Naive thymus-derived CD4-positive, alpha-beta T cell (primary cell): ENCODE measurements at regions of chr1 and their contacts with region 1.

Region 1: GRCh38 chr1:224113918-224114786 is at the start of gene FBXO28:
- DNase-seq: peak; percentile 69 to 94 (median 88)
- ATAC-seq: peak; percentile 96
- H3K4me3 ChIP-seq: peak within 1 kb of the TSS; percentile 92
- H3K4me3 Mint-ChIP-seq: peak within 1 kb of the TSS; percentile 89 to 96 (median 92)
- H3K27ac ChIP-seq: peak within 1 kb of the TSS; percentile 92
- H3K27ac Mint-ChIP-seq: peak within 1 kb of the TSS; percentile 89 to 96 (median 94)
- H3K4me1 ChIP-seq: peaks cover 4 to 14% of the 10 kb centered on the region in 2 donors
- H3K4me1 Mint-ChIP-seq: peaks cover 11 to 41% (median 30%) of the 10 kb centered on the region in 7 donors
- H3K27me3 ChIP-seq: no peaks in the 10 kb centered on the region
- H3K27me3 Mint-ChIP-seq: peaks cover 0 to 26% (median 11%) of the 10 kb centered on the region in 5 donors
- total RNA-seq, gene FBXO28: 25.2 to 37.8 (median 26.5) TPM

Region 2: GRCh38 chr1:224067621-224068457 is 46.3 kb before region 1 on chr1:
- CTCF ChIA-PET with region 1: no interaction called
- POLR2A ChIA-PET with region 1: no interaction called
- intact Hi-C with region 1: no loop called
- DNase-seq: no peak
- ATAC-seq: peak; percentile 72
- H3K4me3 ChIP-seq: no peak overlapping the region
- H3K4me3 Mint-ChIP-seq: no peak overlapping the region
- H3K27ac ChIP-seq: no peak overlapping the region
- H3K27ac Mint-ChIP-seq: no peak overlapping the region
- H3K4me1 ChIP-seq: no peaks in the 10 kb centered on the region
- H3K4me1 Mint-ChIP-seq: peaks cover 0 to 12% (median 10%) of the 10 kb centered on the region in 7 donors
- H3K27me3 ChIP-seq: no peaks in the 10 kb centered on the region
- H3K27me3 Mint-ChIP-seq: peaks cover 5 to 21% (median 17%) of the 10 kb centered on the region in 5 donors

Region 3: GRCh38 chr1:224080115-224080774 is 33.9 kb before region 1 on chr1:
- CTCF ChIA-PET with region 1: no interaction called
- POLR2A ChIA-PET with region 1: no interaction called
- intact Hi-C with region 1: no loop called
- DNase-seq: no peak
- ATAC-seq: no peak
- H3K4me3 ChIP-seq: no peak overlapping the region
- H3K4me3 Mint-ChIP-seq: no peak overlapping the region
- H3K27ac ChIP-seq: no peak overlapping the region
- H3K27ac Mint-ChIP-seq: no peak overlapping the region
- H3K4me1 ChIP-seq: no peaks in the 10 kb centered on the region
- H3K4me1 Mint-ChIP-seq: no peaks in the 10 kb centered on the region
- H3K27me3 ChIP-seq: no peaks in the 10 kb centered on the region
- H3K27me3 Mint-ChIP-seq: peaks cover 0 to 29% (median 7%) of the 10 kb centered on the region in 5 donors

Region 4: GRCh38 chr1:224168859-224169380 is 54.8 kb after region 1 on chr1:
- CTCF ChIA-PET with region 1: interaction called, 5 read pairs
- POLR2A ChIA-PET with region 1: no interaction called
- intact Hi-C with region 1: loop called in 1 of 2 experiments (anchors 2 kb)
- DNase-seq: peak in 7 of 9 donors; percentile 56 to 80 (median 76)
- ATAC-seq: peak; percentile 93
- H3K4me3 ChIP-seq: no peak overlapping the region
- H3K4me3 Mint-ChIP-seq: peak overlapping the region; percentile 59 to 80 (median 70)
- H3K27ac ChIP-seq: no peak overlapping the region
- H3K27ac Mint-ChIP-seq: peak overlapping the region; percentile 43 to 85 (median 77)
- H3K4me1 ChIP-seq: peaks cover 17 to 29% of the 10 kb centered on the region in 2 donors
- H3K4me1 Mint-ChIP-seq: peaks cover 33 to 38% (median 36%) of the 10 kb centered on the region in 7 donors
- H3K27me3 ChIP-seq: no peaks in the 10 kb centered on the region
- H3K27me3 Mint-ChIP-seq: peaks cover 0 to 11% (median 0%) of the 10 kb centered on the region in 5 donors

Region 5: GRCh38 chr1:224259936-224260335 is 145.8 kb after region 1 on chr1:
- CTCF ChIA-PET with region 1: interaction called, 3 read pairs
- POLR2A ChIA-PET with region 1: no interaction called
- intact Hi-C with region 1: loop called in 1 of 2 experiments (anchors 5 kb)
- DNase-seq: no peak
- ATAC-seq: no peak
- H3K4me3 ChIP-seq: no peak overlapping the region
- H3K4me3 Mint-ChIP-seq: no peak overlapping the region
- H3K27ac ChIP-seq: no peak overlapping the region
- H3K27ac Mint-ChIP-seq: no peak overlapping the region
- H3K4me1 ChIP-seq: peaks cover 0 to 6% of the 10 kb centered on the region in 2 donors
- H3K4me1 Mint-ChIP-seq: peaks cover 14 to 28% (median 20%) of the 10 kb centered on the region in 7 donors
- H3K27me3 ChIP-seq: no peaks in the 10 kb centered on the region
- H3K27me3 Mint-ChIP-seq: no peaks in the 10 kb centered on the region

Region 6: GRCh38 chr1:224454397-224455066 is 340.4 kb after region 1 on chr1:
- CTCF ChIA-PET with region 1: interaction called, 16 read pairs
- POLR2A ChIA-PET with region 1: interaction called, 9 read pairs
- intact Hi-C with region 1: loop called (anchors 1 kb)
- DNase-seq: no peak
- ATAC-seq: no peak
- H3K4me3 ChIP-seq: no peak overlapping the region
- H3K4me3 Mint-ChIP-seq: no peak overlapping the region
- H3K27ac ChIP-seq: no peak overlapping the region
- H3K27ac Mint-ChIP-seq: peak overlapping the region in 4 of 9 donors; percentile 20 to 68 (median 44)
- H3K4me1 ChIP-seq: peaks cover 3% of the 10 kb centered on the region in 2 donors
- H3K4me1 Mint-ChIP-seq: peaks cover 13 to 35% (median 19%) of the 10 kb centered on the region in 7 donors
- H3K27me3 ChIP-seq: no peaks in the 10 kb centered on the region
- H3K27me3 Mint-ChIP-seq: no peaks in the 10 kb centered on the region